ENCODE measurements at regions of chr17 and their contacts with region 1.

Region 1: GRCh38 chr17:55348749-55349354 is 72.8 kb downstream of the MMD start:
- DNase-seq: no peak
- ATAC-seq: peak; percentile 83
- H3K4me3 ChIP-seq: no peak overlapping the region
- H3K27ac ChIP-seq: no peak overlapping the region
- H3K4me1 ChIP-seq: no peaks in the 10 kb centered on the region
- H3K27me3 ChIP-seq: no peaks in the 10 kb centered on the region

Region 2: GRCh38 chr17:55053855-55054254 is 295.0 kb before region 1 on chr17:
- intact Hi-C with region 1: loop called in 1 of 2 experiments (anchors 10 kb)
- DNase-seq: no peak
- ATAC-seq: no peak
- H3K4me3 ChIP-seq: no peak overlapping the region
- H3K27ac ChIP-seq: no peak overlapping the region
- H3K4me1 ChIP-seq: peaks cover 0 to 2% of the 10 kb centered on the region in 2 donors
- H3K27me3 ChIP-seq: no peaks in the 10 kb centered on the region

Measured in aorta (tissue), 5 donors.